Activated T-helper 2 cell treated with anti-CD3 and anti-CD28 coated beads, Interferon-gamma antibody, Interleukin-2, Interleukin-4, amounts not matched to agents 10 μg/mL and 5 μg/mL and 100 μg/mL, durations not matched to agents 14 hours and 24 hours and 36 hours (primary cell): ENCODE measurements at regions of chr6 and their contacts with region 1.

Region 1: GRCh38 chr6:134174672-134175198 is 122.3 kb upstream of the SLC2A12 start:
- DNase-seq: peak; percentile 87
- H3K4me3 Mint-ChIP-seq: peak overlapping the region; percentile 98
- H3K27ac Mint-ChIP-seq: peak overlapping the region; percentile 97
- H3K4me1 Mint-ChIP-seq: peaks cover 48% of the 10 kb centered on the region
- H3K27me3 Mint-ChIP-seq: peaks cover 4% of the 10 kb centered on the region

Region 2: DNA sequence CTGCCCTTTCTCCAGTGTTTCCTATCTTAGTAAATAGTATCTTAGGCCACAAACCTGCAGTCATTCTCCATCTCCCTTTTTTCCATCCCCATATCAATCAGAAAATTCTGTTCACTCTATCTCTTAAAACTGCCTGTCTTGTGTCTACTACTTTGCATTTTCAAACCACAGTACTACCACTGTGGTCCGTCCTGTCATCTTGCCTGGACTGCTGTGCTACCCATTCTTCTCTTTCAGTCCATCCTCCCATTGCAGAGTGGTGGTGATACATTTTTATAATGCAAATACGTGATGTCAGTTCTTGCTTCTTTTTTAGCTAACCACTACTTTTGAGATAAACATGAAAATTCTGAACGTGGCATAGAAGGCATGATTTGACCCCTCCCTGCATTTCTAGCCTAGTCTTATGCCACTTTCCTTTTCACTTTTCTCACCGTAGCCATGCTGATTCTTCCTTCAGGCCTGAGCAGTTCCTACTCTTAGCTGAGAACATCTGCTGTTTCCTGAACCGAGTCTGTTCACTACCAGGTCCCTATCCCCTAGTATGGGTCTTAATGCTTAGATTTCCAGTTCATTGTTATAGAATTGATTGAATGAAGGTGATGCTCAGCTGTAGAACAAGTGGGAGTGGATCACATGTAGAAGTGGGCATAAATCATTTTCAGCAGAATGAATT is 207.9 kb before region 1 on chr6:
- intact Hi-C with region 1: no loop called
- DNase-seq: no peak
- H3K4me3 Mint-ChIP-seq: no peak overlapping the region
- H3K27ac Mint-ChIP-seq: no peak overlapping the region
- H3K4me1 Mint-ChIP-seq: peaks cover 23% of the 10 kb centered on the region
- H3K27me3 Mint-ChIP-seq: no peaks in the 10 kb centered on the region

Region 3: DNA sequence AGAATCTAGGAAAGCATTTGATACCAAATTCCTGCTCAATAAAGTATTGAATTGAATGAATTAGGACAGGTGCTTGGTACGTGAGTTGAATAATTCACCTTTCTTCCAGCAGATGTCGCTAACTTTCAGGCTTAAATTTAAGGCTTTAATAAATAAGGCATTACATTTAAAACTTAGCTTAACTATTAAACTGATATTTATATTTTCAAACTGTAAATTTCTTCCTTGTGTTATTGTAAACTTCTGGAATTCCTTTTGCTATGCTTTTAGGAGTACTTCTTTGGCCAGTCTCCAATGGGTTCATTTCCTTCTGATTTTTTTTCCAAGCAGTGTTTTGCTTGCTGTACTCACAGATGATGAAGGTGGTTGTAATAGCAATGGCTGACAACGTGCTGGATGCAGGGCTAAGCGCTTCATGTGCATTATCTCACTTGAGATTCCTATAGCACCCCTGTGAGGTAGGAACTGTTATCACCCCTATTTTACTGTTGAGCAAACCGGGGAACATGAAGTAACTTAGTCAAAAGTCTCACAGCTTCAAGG is 51.0 kb before region 1 on chr6:
- intact Hi-C with region 1: no loop called
- DNase-seq: no peak
- H3K4me3 Mint-ChIP-seq: no peak overlapping the region
- H3K27ac Mint-ChIP-seq: no peak overlapping the region
- H3K4me1 Mint-ChIP-seq: no peaks in the 10 kb centered on the region
- H3K27me3 Mint-ChIP-seq: peaks cover 4% of the 10 kb centered on the region

Region 4: DNA sequence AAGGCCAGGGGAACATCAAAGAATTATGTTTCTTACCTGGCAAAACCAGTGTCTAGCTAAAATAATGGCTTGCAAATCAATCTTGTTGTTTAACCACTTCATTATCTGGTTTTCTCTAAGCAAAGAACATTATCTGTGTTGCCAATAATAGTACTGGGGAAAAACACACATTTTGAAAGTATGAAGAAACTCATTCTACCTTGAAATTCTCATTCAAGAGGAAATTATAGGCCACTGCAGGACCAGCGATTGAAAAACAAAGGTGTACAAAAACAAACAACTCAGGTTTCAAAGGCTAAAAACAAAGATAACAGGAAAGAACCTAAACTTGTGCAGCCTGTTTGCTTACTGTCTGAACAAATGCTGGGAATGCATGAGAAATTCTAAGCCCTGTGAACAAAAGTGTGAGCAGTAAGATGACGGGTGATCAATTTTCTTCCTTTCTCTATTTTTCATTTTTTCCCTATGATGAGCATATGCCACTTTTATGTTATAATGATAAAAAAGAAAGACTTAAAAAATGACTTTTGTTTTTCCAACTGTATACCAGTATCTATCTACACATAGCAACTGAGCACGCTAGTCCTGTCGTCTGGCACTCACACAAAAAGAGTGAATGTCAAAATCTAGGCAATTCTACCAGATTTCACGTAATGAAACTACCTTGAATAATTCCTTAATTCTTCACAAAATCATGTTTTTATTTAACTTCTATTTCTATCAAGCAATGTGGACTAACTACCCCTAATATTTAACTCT is 25.3 kb after region 1 on chr6:
- intact Hi-C with region 1: no loop called
- DNase-seq: no peak
- H3K4me3 Mint-ChIP-seq: no peak overlapping the region
- H3K27ac Mint-ChIP-seq: no peak overlapping the region
- H3K4me1 Mint-ChIP-seq: peaks cover 28% of the 10 kb centered on the region
- H3K27me3 Mint-ChIP-seq: no peaks in the 10 kb centered on the region

Region 5: GRCh38 chr6:134216301-134217010 is 41.7 kb after region 1 on chr6:
- intact Hi-C with region 1: no loop called
- DNase-seq: no peak
- H3K4me3 Mint-ChIP-seq: no peak overlapping the region
- H3K27ac Mint-ChIP-seq: no peak overlapping the region
- H3K4me1 Mint-ChIP-seq: no peaks in the 10 kb centered on the region
- H3K27me3 Mint-ChIP-seq: no peaks in the 10 kb centered on the region

Region 6: DNA sequence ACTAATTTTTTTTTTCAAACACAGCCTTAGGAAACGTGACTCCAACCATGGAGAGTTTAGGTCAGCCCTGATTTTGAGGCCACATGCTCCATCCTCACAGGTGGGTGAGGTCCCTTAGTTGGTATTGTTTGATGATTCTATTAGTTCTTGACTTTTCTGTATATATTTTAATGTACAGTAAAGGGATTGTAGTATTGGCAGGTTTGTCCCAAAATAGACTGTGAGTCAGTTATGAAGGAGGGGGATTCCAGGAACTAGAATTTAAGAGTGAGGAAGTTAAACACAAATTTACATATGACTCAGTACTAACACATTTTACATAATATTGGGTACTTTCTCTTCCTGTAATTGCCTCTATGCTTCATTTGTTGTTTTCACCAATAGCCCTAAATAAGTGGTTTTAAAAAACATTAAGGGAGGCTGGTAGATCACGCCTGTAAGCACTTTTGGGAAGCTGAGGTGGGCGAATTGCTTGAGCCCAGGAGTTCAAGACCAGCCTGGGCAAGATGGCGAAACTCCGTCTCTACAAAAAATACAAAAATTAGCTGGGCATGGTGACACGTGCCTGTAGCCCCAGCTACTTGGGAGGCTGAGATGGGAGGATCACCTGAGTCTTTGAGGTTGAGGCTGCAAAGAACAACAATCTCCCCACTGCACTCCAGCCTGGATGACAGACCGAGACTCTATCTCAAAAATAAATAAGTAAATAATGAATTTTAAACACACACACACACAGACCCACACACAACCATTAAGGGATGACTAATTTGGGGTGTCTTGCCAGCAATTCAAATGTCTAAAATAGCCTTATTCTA is 61.4 kb after region 1 on chr6:
- intact Hi-C with region 1: loop called (anchors 2 kb)
- DNase-seq: no peak
- H3K4me3 Mint-ChIP-seq: no peak overlapping the region
- H3K27ac Mint-ChIP-seq: peak overlapping the region; percentile 58
- H3K4me1 Mint-ChIP-seq: peaks cover 38% of the 10 kb centered on the region
- H3K27me3 Mint-ChIP-seq: no peaks in the 10 kb centered on the region

Region 7: GRCh38 chr6:134379086-134379485 is 204.4 kb after region 1 on chr6:
- intact Hi-C with region 1: loop called (anchors 2 kb)
- DNase-seq: peak; percentile 21
- H3K4me3 Mint-ChIP-seq: no peak overlapping the region
- H3K27ac Mint-ChIP-seq: peak overlapping the region; percentile 79
- H3K4me1 Mint-ChIP-seq: peaks cover 35% of the 10 kb centered on the region
- H3K27me3 Mint-ChIP-seq: no peaks in the 10 kb centered on the region

Region 8: DNA sequence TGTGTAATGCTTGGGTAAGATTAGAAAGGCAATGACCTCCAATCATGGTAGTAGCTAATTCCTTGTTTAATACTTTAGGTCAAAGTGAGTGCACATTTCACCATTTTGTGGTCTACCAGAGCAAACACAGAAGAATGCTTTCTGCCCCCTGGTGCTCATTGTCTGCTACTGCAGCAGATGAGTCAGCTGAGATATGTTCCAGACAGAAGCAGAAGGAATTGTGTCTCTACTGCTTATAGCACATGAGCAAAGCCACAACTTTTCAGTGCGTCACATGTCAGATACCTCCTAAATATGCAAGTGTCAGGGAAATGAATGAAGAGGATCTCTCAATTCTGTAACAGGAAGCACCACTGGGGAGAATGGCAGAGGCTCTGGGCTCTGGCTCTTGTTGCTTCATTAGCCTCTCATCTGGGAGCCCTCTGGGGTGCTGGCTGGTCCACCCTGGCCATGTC is 466.3 kb after region 1 on chr6:
- intact Hi-C with region 1: loop called (anchors 1 kb)
- DNase-seq: peak; percentile 64
- H3K4me3 Mint-ChIP-seq: no peak overlapping the region
- H3K27ac Mint-ChIP-seq: no peak overlapping the region
- H3K4me1 Mint-ChIP-seq: peaks cover 38% of the 10 kb centered on the region
- H3K27me3 Mint-ChIP-seq: peaks cover 7% of the 10 kb centered on the region

Region 9: GRCh38 chr6:134882426-134883038 is 707.8 kb after region 1 on chr6:
- intact Hi-C with region 1: loop called (anchors 1 kb)
- DNase-seq: peak; percentile 28
- H3K4me3 Mint-ChIP-seq: no peak overlapping the region
- H3K27ac Mint-ChIP-seq: no peak overlapping the region
- H3K4me1 Mint-ChIP-seq: no peaks in the 10 kb centered on the region
- H3K27me3 Mint-ChIP-seq: peaks cover 25% of the 10 kb centered on the region